IMR-90 (cell line): ENCODE measurements at regions of chr11 and their contacts with region 1.

Region 1: DNA sequence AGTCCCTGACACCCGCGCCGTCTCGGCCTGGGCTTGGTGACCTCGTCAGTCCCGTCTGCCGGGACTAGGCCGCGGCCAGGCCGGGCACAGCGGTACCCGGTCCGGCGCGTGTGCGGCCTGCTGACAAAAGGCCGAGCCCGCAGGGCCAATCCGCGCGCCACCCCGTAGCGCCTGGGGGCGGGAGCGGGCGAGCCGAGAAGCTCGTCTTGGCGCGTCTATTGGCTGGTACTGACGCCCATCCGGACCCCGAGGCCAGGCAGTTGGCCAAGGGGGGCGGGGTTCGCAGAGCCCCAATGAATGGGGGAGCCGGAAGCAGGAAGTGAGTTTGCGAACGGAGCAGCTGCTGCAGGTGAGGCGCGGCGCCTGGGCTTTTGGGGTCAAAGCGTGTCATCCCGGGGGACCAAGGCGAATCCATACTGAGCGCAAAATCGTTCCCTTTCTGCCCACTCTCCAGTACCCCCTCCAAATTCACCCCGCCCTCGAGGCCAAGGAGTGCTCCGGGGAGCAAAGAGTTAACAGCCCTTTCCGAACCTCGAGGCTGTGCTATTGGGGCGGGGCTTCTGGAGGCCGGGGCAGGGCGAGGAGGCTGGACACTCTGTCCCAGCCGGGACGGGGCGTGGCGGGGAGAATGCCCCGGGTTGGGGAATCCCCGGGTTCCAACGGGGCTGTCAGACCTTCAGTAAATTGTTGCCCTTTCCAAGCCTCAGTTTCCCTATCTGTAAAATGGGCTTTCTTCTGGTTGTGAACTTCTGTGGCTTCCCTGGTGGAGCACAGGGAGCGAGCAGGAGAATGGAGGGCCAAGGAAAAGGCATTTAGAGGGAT is at the start of gene DPP3:
- DNase-seq: peak; percentile 95
- ATAC-seq: peak; percentile 93
- H3K4me3 ChIP-seq: peak within 1 kb of the TSS; percentile 82
- H3K27ac ChIP-seq: peak within 1 kb of the TSS; percentile 91
- H3K4me1 ChIP-seq: peaks cover 8% of the 10 kb centered on the region
- H3K27me3 ChIP-seq: no peaks in the 10 kb centered on the region
- CTCF ChIP-seq: no peak
- POLR2A ChIP-seq: peak; percentile 93
- RAD21 ChIP-seq: no peak
- total RNA-seq, gene DPP3: 51.8 and 52.8 TPM in 2 replicates

Region 2: GRCh38 chr11:66438504-66439466 is 41.5 kb before region 1 on chr11 and contains the start of gene MRPL11:
- CTCF ChIA-PET with region 1: interaction called, 3 read pairs
- POLR2A ChIA-PET with region 1: no interaction called
- dilution Hi-C with region 1: no loop called
- in situ Hi-C with region 1: no loop called
- intact Hi-C with region 1: loop called (anchors 2 kb)
- DNase-seq: peak; percentile 93
- ATAC-seq: peak; percentile 99
- H3K4me3 ChIP-seq: peak within 1 kb of the TSS; percentile 77
- H3K27ac ChIP-seq: peak within 1 kb of the TSS; percentile 81
- H3K4me1 ChIP-seq: peaks cover 8% of the 10 kb centered on the region
- H3K27me3 ChIP-seq: no peaks in the 10 kb centered on the region
- CTCF ChIP-seq: peak; percentile 87
- POLR2A ChIP-seq: no peak
- RAD21 ChIP-seq: peak; percentile 55
- total RNA-seq, gene MRPL11: 39.2 and 45.5 TPM in 2 replicates

Region 3: GRCh38 chr11:66466225-66467027 is 13.9 kb before region 1 on chr11 and contains the start of gene PELI3:
- CTCF ChIA-PET with region 1: interaction called, 4 read pairs
- POLR2A ChIA-PET with region 1: interaction called, 16 read pairs
- dilution Hi-C with region 1: no loop called
- in situ Hi-C with region 1: no loop called
- intact Hi-C with region 1: no loop called
- DNase-seq: peak; percentile 88
- ATAC-seq: peak; percentile 96
- H3K4me3 ChIP-seq: peak within 1 kb of the TSS; percentile 71
- H3K27ac ChIP-seq: peak within 1 kb of the TSS; percentile 66
- H3K4me1 ChIP-seq: peaks cover 8% of the 10 kb centered on the region; the same call in 1 of the 2 replicates
- H3K27me3 ChIP-seq: no peaks in the 10 kb centered on the region
- CTCF ChIP-seq: no peak
- POLR2A ChIP-seq: peak; percentile 56
- RAD21 ChIP-seq: no peak
- total RNA-seq, gene PELI3: 3.9 and 5.0 TPM in 2 replicates

Region 4: GRCh38 chr11:66568124-66568916 is 88.0 kb after region 1 on chr11 and contains the start of gene CTSF:
- CTCF ChIA-PET with region 1: no interaction called
- POLR2A ChIA-PET with region 1: no interaction called
- dilution Hi-C with region 1: no loop called
- in situ Hi-C with region 1: no loop called
- intact Hi-C with region 1: no loop called
- DNase-seq: peak; percentile 49
- ATAC-seq: peak; percentile 98
- H3K4me3 ChIP-seq: peak within 1 kb of the TSS; percentile 41
- H3K27ac ChIP-seq: no peak within 1 kb of the TSS
- H3K4me1 ChIP-seq: peaks cover 3% of the 10 kb centered on the region; the same call in 1 of the 2 replicates
- H3K27me3 ChIP-seq: peaks cover 2% of the 10 kb centered on the region; the same call in 1 of the 2 replicates
- CTCF ChIP-seq: no peak
- POLR2A ChIP-seq: no peak
- RAD21 ChIP-seq: no peak
- total RNA-seq, gene CTSF: 3.6 and 4.1 TPM in 2 replicates

Region 5: GRCh38 chr11:66616379-66617154 is 136.2 kb after region 1 on chr11 and contains the start of gene RBM14:
- CTCF ChIA-PET with region 1: no interaction called
- POLR2A ChIA-PET with region 1: no interaction called
- dilution Hi-C with region 1: no loop called
- in situ Hi-C with region 1: no loop called
- intact Hi-C with region 1: loop called (anchors 2 kb)
- DNase-seq: peak; percentile 99
- ATAC-seq: peak; percentile 95
- H3K4me3 ChIP-seq: peak within 1 kb of the TSS; percentile 65
- H3K27ac ChIP-seq: peak within 1 kb of the TSS; percentile 86
- H3K4me1 ChIP-seq: peaks cover 2% of the 10 kb centered on the region; the same call in 1 of the 2 replicates
- H3K27me3 ChIP-seq: no peaks in the 10 kb centered on the region
- CTCF ChIP-seq: no peak
- POLR2A ChIP-seq: peak; percentile 99
- RAD21 ChIP-seq: no peak; the same call in 1 of the 2 replicates
- total RNA-seq, gene RBM14: 9.3 and 12.2 TPM in 2 replicates